H1 (cell line): ENCODE measurements at regions of chr9 and their contacts with region 1.

Region 1: DNA sequence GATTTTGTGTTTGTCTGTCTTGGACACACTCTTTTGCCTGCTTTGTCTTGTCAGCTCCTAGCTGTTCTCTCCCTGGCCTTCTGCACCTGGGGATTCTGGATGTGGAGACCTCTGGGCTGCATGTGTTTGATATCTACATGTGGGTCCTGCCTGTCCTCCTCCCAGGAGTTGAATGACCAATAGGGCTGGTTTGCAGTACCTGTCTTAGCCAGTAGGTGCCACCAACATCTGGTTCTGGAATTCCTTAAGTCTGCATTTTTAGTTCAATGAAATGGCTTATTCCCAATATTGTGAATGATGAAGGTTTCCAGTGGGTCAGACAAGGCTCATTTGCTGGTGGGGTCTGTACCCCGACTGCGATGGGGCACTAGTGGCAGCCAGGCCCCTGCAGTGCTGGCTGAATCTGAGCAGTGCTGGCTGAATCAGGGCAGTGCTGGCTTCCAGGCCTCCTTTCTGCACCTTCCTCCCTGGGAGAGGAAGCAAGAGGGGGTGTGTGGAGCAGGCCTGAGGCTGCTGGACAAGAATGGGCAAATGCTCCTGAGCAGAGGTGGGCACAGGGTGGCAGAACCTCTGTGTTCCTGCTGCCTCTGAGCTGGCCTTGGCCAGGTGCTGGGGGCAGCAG is 73.3 kb downstream of the RXRA start:
- DNase-seq: no peak
- H3K4me3 ChIP-seq: no peak overlapping the region
- H3K27ac ChIP-seq: no peak overlapping the region; the same call in 1 of the 2 replicates
- H3K4me1 ChIP-seq: peaks cover 0 to 4% (median 1%) of the 10 kb centered on the region in 4 experiments; a peak in 2 of 7 replicates
- H3K27me3 ChIP-seq: no peaks in the 10 kb centered on the region
- CTCF ChIP-seq: peak in 2 of 3 experiments; percentile 41 to 69; a peak in 3 of 4 replicates
- EP300 ChIP-seq: no peak
- POLR2A ChIP-seq: no peak
- RAD21 ChIP-seq: peak in 1 of 2 experiments; percentile 28; a peak in 2 of 4 replicates

Region 2: GRCh38 chr9:134361426-134362414 is 37.8 kb before region 1 on chr9:
- CTCF ChIA-PET with region 1: no interaction called
- POLR2A ChIA-PET with region 1: no interaction called
- DNase-seq: no peak
- H3K4me3 ChIP-seq: no peak overlapping the region
- H3K27ac ChIP-seq: no peak overlapping the region
- H3K4me1 ChIP-seq: no peaks in the 10 kb centered on the region
- H3K27me3 ChIP-seq: no peaks in the 10 kb centered on the region
- CTCF ChIP-seq: no peak
- EP300 ChIP-seq: no peak
- POLR2A ChIP-seq: no peak
- RAD21 ChIP-seq: no peak

Region 3: DNA sequence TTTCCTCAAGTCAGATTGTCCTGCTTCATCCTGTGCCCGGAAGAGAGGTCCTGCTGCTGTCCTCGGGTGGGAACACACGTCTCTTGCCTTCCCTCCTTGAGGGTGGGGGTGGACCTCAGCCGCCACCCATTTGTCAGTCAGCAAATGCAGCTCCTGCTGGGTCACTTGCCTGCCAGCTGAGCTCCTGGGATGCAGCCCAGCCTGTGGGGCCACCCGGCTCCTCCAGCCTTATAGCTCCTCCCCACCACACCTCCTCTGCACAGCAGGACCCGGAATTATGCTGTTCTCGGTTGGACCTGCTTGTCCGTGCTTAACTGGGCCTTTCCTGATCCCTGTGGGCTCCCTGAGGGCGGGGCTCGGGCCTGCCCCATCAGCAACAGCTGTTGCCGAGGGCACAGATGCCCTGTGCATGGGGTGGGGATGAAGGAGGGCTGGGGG is 20.6 kb before region 1 on chr9:
- CTCF ChIA-PET with region 1: interaction called, 11 read pairs
- POLR2A ChIA-PET with region 1: no interaction called
- DNase-seq: no peak
- H3K4me3 ChIP-seq: no peak overlapping the region
- H3K27ac ChIP-seq: no peak overlapping the region; the same call in 1 of the 2 replicates
- H3K4me1 ChIP-seq: peaks cover 0 to 20% (median 9%) of the 10 kb centered on the region in 4 experiments; a peak in 6 of 7 replicates
- H3K27me3 ChIP-seq: no peaks in the 10 kb centered on the region
- CTCF ChIP-seq: no peak
- EP300 ChIP-seq: no peak
- POLR2A ChIP-seq: no peak
- RAD21 ChIP-seq: no peak

Region 4: GRCh38 chr9:134384811-134385479 is 14.6 kb before region 1 on chr9:
- CTCF ChIA-PET with region 1: interaction called, 24 read pairs
- POLR2A ChIA-PET with region 1: no interaction called
- DNase-seq: no peak
- H3K4me3 ChIP-seq: no peak overlapping the region
- H3K27ac ChIP-seq: no peak overlapping the region; the same call in 1 of the 2 replicates
- H3K4me1 ChIP-seq: peaks cover 0 to 2% (median 0%) of the 10 kb centered on the region in 4 experiments; a peak in 2 of 7 replicates
- H3K27me3 ChIP-seq: no peaks in the 10 kb centered on the region
- CTCF ChIP-seq: no peak
- EP300 ChIP-seq: no peak
- POLR2A ChIP-seq: no peak
- RAD21 ChIP-seq: no peak

Region 5: GRCh38 chr9:134492281-134492691 is 92.7 kb after region 1 on chr9:
- CTCF ChIA-PET with region 1: no interaction called
- POLR2A ChIA-PET with region 1: no interaction called
- DNase-seq: no peak
- H3K4me3 ChIP-seq: no peak overlapping the region
- H3K27ac ChIP-seq: no peak overlapping the region
- H3K4me1 ChIP-seq: peaks cover 0 to 5% (median 0%) of the 10 kb centered on the region in 4 experiments; a peak in 2 of 7 replicates
- H3K27me3 ChIP-seq: no peaks in the 10 kb centered on the region; a peak in 1 of 7 replicates
- CTCF ChIP-seq: no peak
- EP300 ChIP-seq: no peak
- POLR2A ChIP-seq: no peak
- RAD21 ChIP-seq: no peak